Endothelial cell of umbilical vein (primary cell): ENCODE measurements at regions of chr22 and their contacts with region 1.

Region 1: GRCh38 chr22:31345331-31346254 is 553 bp downstream of the PATZ1 start:
- DNase-seq: peak; percentile 80
- H3K4me3 ChIP-seq: peak overlapping the region; percentile 40 to 75 (median 49)
- H3K27ac ChIP-seq: no peak overlapping the region
- H3K4me1 ChIP-seq: peaks cover 39% of the 10 kb centered on the region
- H3K27me3 ChIP-seq: no peaks in the 10 kb centered on the region
- CTCF ChIP-seq: peak; percentile 79 to 87
- POLR2A ChIP-seq: peak; percentile 43

Region 2: GRCh38 chr22:30196141-30196879 is 1149.3 kb before region 1 on chr22:
- CTCF ChIA-PET with region 1: no interaction called
- POLR2A ChIA-PET with region 1: no interaction called
- dilution Hi-C with region 1: no loop called
- intact Hi-C with region 1: no loop called
- DNase-seq: peak; percentile 95
- H3K4me3 ChIP-seq: peak overlapping the region in 1 of 3 experiments; percentile 44
- H3K27ac ChIP-seq: peak overlapping the region; percentile 99
- H3K4me1 ChIP-seq: peaks cover 47% of the 10 kb centered on the region
- H3K27me3 ChIP-seq: no peaks in the 10 kb centered on the region
- CTCF ChIP-seq: no peak
- POLR2A ChIP-seq: no peak

Region 3: DNA sequence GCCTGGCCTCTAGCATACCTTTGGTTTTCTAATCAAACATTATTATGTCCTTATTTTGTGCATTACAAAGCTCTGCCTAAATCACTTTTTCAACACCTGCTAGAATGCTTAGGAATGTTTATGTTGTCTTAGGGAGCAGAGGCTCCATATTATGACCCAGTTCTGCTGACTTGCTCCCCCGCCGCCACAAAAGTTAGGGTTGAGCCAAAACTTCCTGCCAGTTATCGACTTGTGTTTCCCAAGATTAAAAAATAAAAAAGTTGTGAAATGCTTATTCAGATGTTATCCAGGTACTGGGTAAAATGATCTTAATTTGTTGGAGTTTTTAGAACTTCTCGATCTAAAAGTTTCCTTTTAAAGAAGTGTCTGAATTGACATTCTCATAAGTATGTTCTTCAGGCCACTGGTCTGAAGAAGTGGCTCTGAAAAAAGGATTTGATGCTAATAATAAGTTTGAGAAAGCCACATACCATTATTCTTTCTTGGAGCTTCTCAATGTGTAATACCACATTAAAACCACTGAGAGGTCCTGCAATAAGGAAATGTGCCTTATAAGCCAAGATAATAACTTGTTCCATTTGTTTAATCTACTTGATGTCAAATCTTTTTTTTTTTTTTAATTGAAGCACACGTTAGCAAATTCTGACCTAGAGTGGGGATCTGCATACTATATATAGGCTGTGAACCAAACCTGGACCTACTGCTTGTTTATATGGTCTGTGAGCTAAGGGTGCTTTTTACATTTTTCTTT is 183.4 kb before region 1 on chr22:
- CTCF ChIA-PET with region 1: no interaction called
- POLR2A ChIA-PET with region 1: no interaction called
- dilution Hi-C with region 1: no loop called
- intact Hi-C with region 1: no loop called
- DNase-seq: peak; percentile 33
- H3K4me3 ChIP-seq: no peak overlapping the region
- H3K27ac ChIP-seq: no peak overlapping the region
- H3K4me1 ChIP-seq: peaks cover 19% of the 10 kb centered on the region
- H3K27me3 ChIP-seq: no peaks in the 10 kb centered on the region
- CTCF ChIP-seq: no peak
- POLR2A ChIP-seq: no peak

Region 4: GRCh38 chr22:31248138-31248745 is 97.4 kb before region 1 on chr22:
- CTCF ChIA-PET with region 1: no interaction called
- POLR2A ChIA-PET with region 1: no interaction called
- dilution Hi-C with region 1: no loop called
- intact Hi-C with region 1: no loop called
- DNase-seq: peak; percentile 60
- H3K4me3 ChIP-seq: no peak overlapping the region
- H3K27ac ChIP-seq: no peak overlapping the region
- H3K4me1 ChIP-seq: peaks cover 23% of the 10 kb centered on the region
- H3K27me3 ChIP-seq: no peaks in the 10 kb centered on the region
- CTCF ChIP-seq: no peak
- POLR2A ChIP-seq: no peak

Region 5: DNA sequence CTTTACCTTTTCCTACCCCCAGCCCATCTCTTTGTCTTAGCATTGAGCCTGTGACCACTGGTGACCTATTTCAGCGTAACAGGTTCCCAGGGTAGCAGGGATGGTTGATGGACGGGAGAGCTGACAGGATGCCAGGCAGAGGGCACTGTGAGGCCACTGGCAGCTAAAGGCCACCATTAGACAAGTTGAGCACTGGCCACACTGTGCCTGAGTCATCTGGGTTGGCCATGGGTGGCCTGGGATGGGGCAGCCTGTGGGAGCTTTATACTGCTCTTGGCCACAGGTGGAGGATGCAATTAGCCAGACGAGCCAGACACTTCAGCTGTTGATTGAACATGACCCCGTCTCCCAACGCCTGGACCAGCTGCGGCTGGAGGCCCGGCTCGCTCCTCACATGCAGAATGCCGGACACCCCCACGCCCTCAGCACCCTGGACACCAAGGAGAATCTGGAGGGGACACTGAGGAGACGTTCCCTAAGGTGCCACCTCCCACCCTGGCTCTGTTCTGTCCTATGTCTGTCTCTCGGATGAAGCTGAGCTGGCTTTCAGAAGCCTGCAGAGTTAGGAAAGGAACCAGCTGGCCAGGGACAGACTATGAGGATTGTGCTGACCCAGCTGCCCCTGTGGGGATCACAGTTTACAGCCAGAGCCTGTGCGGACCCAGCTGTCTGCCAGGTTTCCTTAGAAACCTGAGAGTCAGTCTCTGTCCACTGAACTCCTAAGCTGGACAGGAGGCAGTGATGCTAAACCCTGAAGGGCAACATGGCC is 83.1 kb before region 1 on chr22:
- CTCF ChIA-PET with region 1: no interaction called
- POLR2A ChIA-PET with region 1: no interaction called
- dilution Hi-C with region 1: no loop called
- intact Hi-C with region 1: no loop called
- DNase-seq: no peak
- H3K4me3 ChIP-seq: no peak overlapping the region
- H3K27ac ChIP-seq: no peak overlapping the region
- H3K4me1 ChIP-seq: no peaks in the 10 kb centered on the region
- H3K27me3 ChIP-seq: no peaks in the 10 kb centered on the region
- CTCF ChIP-seq: no peak
- POLR2A ChIP-seq: no peak

Region 6: DNA sequence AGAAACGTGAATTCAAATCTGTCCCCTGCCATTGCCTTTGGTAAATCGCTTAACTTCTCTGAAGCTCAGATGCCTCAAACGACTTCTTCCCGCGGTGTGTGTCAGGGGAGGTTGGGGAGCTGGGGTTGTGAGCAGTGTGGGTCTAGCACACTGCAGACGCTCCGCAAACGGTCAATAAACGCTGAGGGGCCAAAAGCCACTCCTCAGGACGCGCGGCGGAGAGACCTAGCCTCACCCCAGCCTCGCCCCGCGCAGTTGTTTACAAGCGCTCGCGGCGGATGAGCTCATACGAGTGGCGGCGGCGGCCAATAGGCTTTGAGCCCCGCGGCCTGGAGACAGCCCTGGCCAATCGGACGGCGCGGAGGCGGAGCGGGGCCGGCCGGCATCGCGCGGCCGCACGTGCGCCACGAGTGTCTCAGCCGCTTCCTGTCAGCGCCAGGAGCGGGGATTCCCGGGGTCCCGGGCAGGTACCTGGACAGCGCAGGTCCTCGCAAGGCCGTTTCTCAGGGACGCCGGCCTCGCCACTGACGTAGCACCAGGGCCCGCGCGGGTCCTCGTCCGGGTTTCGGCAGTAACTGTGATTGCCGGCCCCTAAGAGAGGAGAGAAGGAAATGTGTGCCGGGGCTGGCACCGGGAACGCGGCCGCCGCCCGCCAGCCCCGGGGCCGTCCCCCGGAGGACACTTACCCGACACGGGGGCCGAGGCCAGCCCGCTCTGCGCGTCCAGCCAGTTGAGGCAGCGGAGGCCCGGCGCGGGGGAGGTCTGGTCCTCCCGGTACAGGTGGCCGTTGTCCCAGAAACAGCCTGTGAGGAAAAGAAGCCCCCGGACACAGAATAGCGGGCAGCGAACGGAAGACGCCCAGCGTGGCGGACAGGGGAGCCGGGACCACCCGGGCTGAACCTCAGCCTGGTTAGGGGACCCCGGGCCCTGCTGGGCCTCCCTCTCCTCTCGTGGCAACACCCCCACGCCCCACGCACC is 54.8 kb before region 1 on chr22:
- CTCF ChIA-PET with region 1: interaction called, 15 read pairs
- POLR2A ChIA-PET with region 1: no interaction called
- dilution Hi-C with region 1: no loop called
- intact Hi-C with region 1: loop called (anchors 1 kb)
- DNase-seq: peak; percentile 96
- H3K4me3 ChIP-seq: peak overlapping the region; percentile 41 to 69 (median 45)
- H3K27ac ChIP-seq: peak overlapping the region; percentile 50
- H3K4me1 ChIP-seq: peaks cover 41% of the 10 kb centered on the region
- H3K27me3 ChIP-seq: no peaks in the 10 kb centered on the region
- CTCF ChIP-seq: no peak
- POLR2A ChIP-seq: no peak

Region 7: DNA sequence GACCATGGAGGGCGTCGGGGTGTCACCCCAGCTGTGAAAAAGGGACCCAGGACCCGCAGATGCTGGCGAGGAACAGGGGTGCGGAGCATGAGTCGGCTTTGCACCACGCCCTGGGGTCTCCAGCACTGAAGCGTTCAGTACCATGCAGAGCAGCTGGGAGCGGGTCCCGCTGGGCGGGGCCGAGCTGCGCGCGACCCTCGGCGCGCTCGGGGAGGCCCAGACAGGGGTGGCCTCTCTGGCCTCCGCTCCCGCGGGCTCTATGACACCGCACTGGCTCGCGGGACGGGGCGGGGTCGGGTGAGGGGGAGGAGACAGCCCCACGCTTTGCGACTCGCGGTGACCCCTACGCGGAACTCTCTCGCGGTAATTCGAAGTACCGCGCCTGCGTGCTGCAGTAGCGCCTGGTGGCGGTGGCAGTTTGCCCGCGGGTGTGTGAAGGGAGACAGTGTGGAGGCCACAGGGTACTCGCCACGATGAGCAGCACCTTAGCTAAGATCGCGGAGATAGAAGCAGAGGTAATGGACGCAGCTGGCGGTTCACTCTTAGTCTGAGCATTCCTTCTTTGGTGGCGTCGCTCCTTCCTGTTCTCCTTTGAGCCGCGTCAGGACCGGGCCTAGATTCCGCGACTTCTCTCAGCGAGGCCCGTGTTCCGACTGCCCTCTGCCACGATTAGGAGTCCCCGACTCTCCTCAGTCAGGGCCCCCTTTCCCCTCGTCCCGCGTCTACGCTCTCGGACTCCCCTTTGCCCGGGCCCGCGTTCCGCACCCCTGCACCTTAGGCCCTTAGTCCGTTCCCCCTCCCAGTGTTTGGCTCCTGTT is 53.8 kb after region 1 on chr22 and contains the start of gene DRG1:
- CTCF ChIA-PET with region 1: interaction called, 4 read pairs
- POLR2A ChIA-PET with region 1: no interaction called
- dilution Hi-C with region 1: no loop called
- intact Hi-C with region 1: loop called (anchors 1 kb)
- DNase-seq: peak; percentile 96
- H3K4me3 ChIP-seq: peak within 1 kb of the TSS; percentile 57 to 87 (median 69)
- H3K27ac ChIP-seq: peak within 1 kb of the TSS; percentile 79
- H3K4me1 ChIP-seq: peaks cover 13% of the 10 kb centered on the region
- H3K27me3 ChIP-seq: no peaks in the 10 kb centered on the region
- CTCF ChIP-seq: no peak
- POLR2A ChIP-seq: peak; percentile 99
- total RNA-seq, gene DRG1: 51.6 and 65.1 TPM in 2 replicates